ENCODE measurements at regions of chr5 and their contacts with region 1.

Region 1: DNA sequence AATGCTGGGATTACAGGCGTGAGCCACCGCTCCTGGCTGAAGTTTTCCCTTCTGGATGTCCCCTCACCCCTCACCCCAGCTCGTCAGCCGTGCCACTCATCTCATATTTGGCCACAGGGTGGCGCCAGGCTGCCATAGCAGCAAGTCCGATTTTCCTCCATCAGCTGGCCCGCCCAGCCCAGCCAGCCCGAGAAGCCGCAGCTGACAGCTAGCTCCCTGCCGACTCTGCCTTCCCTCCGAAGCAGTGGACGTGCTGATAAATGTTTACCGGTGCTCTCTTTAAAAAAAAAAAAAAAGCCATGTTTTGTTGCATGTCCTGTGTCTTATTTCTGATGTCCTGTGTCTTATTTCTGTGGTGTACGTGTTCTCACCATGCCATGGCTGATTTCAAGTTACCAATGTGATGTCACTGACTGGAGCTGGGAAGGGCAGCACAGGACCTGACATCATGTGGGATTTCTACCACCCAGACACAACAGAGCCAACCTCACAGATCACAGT is 58.3 kb downstream of the PFDN1 start:
- DNase-seq: peak; percentile 73
- H3K4me3 ChIP-seq: no peak overlapping the region
- H3K27ac ChIP-seq: no peak overlapping the region
- H3K4me1 ChIP-seq: peaks cover 42% of the 10 kb centered on the region
- H3K27me3 ChIP-seq: no peaks in the 10 kb centered on the region
- CTCF ChIP-seq: peak; percentile 62 to 84

Region 2: GRCh38 chr5:140174465-140175366 is 69.9 kb before region 1 on chr5 and contains the start of gene CYSTM1:
- CTCF ChIA-PET with region 1: interaction called, 3 read pairs
- dilution Hi-C with region 1: no loop called
- in situ Hi-C with region 1: no loop called
- intact Hi-C with region 1: loop called (anchors 1 kb)
- DNase-seq: peak; percentile 96
- H3K4me3 ChIP-seq: peak within 1 kb of the TSS; percentile 58 to 94 (median 67)
- H3K27ac ChIP-seq: peak within 1 kb of the TSS; percentile 72
- H3K4me1 ChIP-seq: peaks cover 4% of the 10 kb centered on the region
- H3K27me3 ChIP-seq: no peaks in the 10 kb centered on the region
- CTCF ChIP-seq: no peak
- total RNA-seq, gene CYSTM1: 27.5 to 31.7 TPM

Region 3: GRCh38 chr5:140284013-140284412 is 39.4 kb after region 1 on chr5:
- CTCF ChIA-PET with region 1: no interaction called
- dilution Hi-C with region 1: no loop called
- in situ Hi-C with region 1: no loop called
- intact Hi-C with region 1: no loop called
- DNase-seq: no peak
- H3K4me3 ChIP-seq: no peak overlapping the region
- H3K27ac ChIP-seq: no peak overlapping the region
- H3K4me1 ChIP-seq: no peaks in the 10 kb centered on the region
- H3K27me3 ChIP-seq: no peaks in the 10 kb centered on the region
- CTCF ChIP-seq: no peak

Region 4: DNA sequence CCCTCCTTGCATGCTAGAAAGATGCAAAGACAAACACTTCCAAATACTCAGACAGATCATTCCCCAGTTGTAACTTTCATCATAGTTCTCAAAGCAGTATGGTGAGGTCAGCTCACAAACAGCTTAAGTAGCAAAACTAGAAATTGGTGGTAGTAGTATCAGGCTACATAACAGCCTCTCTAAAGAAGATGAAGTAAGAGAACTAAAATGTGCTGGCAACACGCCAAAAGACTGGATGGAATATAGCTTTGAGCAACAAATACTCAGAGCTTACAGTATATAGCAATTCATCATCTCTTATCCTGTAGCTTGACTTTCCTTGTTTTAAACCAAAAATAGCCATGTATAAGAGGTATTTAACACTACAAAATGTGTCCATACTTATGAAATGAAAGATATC is 50.8 kb after region 1 on chr5:
- CTCF ChIA-PET with region 1: interaction called, 6 read pairs
- dilution Hi-C with region 1: no loop called
- in situ Hi-C with region 1: no loop called
- intact Hi-C with region 1: loop called (anchors 1 kb)
- DNase-seq: peak; percentile 93
- H3K4me3 ChIP-seq: no peak overlapping the region
- H3K27ac ChIP-seq: peak overlapping the region; percentile 1
- H3K4me1 ChIP-seq: peaks cover 41% of the 10 kb centered on the region
- H3K27me3 ChIP-seq: no peaks in the 10 kb centered on the region
- CTCF ChIP-seq: no peak

Region 5: DNA sequence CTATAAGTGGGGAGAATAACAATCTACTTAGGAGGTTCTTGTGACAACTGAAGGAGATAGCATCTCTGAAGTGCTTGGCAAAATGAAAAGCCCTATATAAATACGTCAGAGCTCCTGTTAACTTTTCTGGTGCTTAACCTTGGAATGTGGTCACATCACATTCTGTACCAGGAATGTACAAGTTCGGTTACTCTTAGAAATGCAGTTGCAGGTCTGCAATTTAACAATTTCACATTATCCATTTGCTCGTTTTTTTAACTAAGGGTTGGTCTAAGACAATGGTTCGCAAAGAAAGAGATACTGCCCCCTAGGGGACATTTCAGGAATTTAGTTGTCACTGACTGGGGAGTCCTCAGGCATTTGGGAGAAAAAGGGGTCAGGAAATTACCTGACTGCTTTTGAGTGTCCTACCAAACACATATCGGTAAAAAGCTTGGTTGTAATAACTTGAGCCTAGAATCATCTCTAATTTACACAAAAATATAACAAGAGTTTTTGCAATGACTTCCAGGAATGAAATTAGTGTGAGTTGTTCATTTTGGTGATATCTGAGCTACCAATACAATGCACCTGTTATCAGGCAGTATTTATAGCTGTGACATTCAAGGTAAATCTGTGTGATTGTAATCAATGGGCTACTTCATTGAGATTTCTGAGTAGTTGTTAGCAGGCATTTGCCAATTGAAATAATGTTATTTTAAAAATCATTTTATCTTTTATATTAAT is 107.2 kb after region 1 on chr5:
- CTCF ChIA-PET with region 1: interaction called, 18 read pairs
- dilution Hi-C with region 1: no loop called
- in situ Hi-C with region 1: loop called (anchors 5 kb)
- intact Hi-C with region 1: loop called (anchors 1 kb)
- DNase-seq: peak; percentile 65
- H3K4me3 ChIP-seq: no peak overlapping the region
- H3K27ac ChIP-seq: no peak overlapping the region
- H3K4me1 ChIP-seq: peaks cover 30% of the 10 kb centered on the region
- H3K27me3 ChIP-seq: no peaks in the 10 kb centered on the region
- CTCF ChIP-seq: peak; percentile 82 to 88

Region 6: GRCh38 chr5:140357726-140358093 is 113.1 kb after region 1 on chr5:
- CTCF ChIA-PET with region 1: interaction called, 19 read pairs
- dilution Hi-C with region 1: no loop called
- in situ Hi-C with region 1: loop called (anchors 5 kb)
- intact Hi-C with region 1: loop called (anchors 1 kb)
- DNase-seq: peak; percentile 77
- H3K4me3 ChIP-seq: no peak overlapping the region
- H3K27ac ChIP-seq: peak overlapping the region; percentile 4
- H3K4me1 ChIP-seq: peaks cover 4% of the 10 kb centered on the region
- H3K27me3 ChIP-seq: no peaks in the 10 kb centered on the region
- CTCF ChIP-seq: peak; percentile 81 to 93

Region 7: GRCh38 chr5:140639148-140639979 is 394.8 kb after region 1 on chr5 and contains the start of gene TMCO6:
- CTCF ChIA-PET with region 1: no interaction called
- dilution Hi-C with region 1: no loop called
- in situ Hi-C with region 1: no loop called
- intact Hi-C with region 1: loop called (anchors 5 kb)
- DNase-seq: peak; percentile 92
- H3K4me3 ChIP-seq: peak within 1 kb of the TSS; percentile 69 to 78 (median 76)
- H3K27ac ChIP-seq: peak within 1 kb of the TSS; percentile 38
- H3K4me1 ChIP-seq: peaks cover 11% of the 10 kb centered on the region
- H3K27me3 ChIP-seq: no peaks in the 10 kb centered on the region
- CTCF ChIP-seq: peak; percentile 21 to 66
- total RNA-seq, gene TMCO6: 4.0 to 16.5 TPM

Region 8: GRCh38 chr5:140806834-140807775 is 562.5 kb after region 1 on chr5 and contains the start of gene PCDHA4:
- CTCF ChIA-PET with region 1: no interaction called
- dilution Hi-C with region 1: no loop called
- in situ Hi-C with region 1: no loop called
- intact Hi-C with region 1: no loop called
- DNase-seq: peak; percentile 42
- H3K4me3 ChIP-seq: no peak within 1 kb of the TSS
- H3K27ac ChIP-seq: no peak within 1 kb of the TSS
- H3K4me1 ChIP-seq: no peaks in the 10 kb centered on the region
- H3K27me3 ChIP-seq: no peaks in the 10 kb centered on the region
- CTCF ChIP-seq: peak in 1 of 2 donors; percentile 11
- total RNA-seq, gene PCDHA4: 0.45 to 0.83 TPM